GM10248 (cell line): ENCODE measurements at regions of chr12 and their contacts with region 1.

Region 1: DNA sequence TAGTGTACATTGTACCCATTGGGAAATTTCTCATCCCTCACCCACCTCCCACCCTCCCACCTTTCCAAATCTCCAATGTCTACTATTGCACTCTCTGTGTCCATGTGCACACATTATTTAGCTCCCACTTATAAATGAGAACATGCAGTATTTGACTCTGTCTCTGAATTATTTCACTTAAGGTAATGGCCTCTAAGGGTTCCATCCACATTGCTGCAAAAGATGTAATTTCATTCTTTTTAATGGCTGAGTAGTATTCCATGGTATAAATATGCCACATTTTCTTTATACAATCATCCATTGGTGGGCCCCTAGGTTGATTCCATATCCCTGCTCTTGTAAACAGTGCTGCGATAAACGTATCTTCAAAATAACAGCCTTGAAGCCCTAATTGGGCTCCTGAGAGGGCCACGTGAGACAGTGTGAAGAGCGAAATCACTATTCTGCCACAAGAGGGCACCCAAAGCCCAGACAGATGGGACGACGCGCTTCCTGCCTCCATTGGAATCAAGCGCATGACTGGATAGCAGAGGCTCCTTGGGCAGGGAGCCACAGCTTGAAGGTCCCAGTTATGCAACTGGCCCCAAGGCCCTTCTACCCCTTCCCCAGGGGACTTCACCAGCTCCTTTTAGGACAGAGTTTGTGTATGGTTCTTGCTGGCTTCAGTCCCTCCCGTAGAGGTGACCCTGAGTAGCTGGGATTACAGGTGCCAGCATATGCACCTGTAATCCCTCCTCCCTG is 21.3 kb upstream of the CD27 start:
- DNase-seq: peak; percentile 85
- CTCF ChIP-seq: peak; percentile 83

Region 2: DNA sequence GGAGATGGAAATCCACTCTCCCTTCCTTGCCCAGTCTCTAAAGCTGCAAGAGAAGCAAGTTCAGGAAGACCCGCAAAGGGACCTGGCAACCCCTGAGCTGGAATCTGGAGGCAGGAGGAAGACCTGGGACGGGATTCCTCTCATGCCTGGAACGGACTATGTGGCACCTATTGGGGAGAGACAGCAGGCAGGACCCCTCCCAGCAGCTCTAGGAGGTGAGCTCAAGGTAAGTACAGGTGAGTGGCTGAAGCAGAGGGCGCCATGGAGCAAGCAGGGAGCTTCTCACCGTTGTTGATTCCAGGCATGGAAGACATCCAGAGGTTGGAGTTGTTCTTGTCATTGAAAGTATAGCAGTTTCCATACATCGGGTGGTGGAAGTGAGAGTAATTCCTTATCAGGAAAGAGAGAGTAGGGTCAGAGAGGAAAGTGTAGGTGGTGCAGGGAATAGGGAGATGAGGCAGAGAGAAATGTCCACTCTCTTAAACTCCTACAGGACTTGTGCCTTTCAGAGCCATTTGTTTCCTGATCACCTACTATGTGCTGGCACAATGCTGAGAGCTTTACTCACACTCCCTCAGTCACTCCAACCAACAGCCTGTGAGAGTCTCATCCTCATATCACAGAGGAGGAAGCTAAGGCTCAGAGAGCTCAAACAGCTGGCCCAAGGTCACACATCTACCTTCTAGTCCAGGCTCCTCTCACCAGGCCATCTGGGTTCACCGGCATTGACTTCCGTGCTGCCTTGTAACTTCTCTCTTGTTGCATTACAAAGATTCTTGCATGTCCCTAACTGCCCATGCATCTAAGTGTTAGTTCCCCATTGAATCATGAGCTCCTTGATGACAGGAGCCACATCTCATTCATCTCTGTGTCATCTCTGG is 67.7 kb before region 1 on chr12:
- CTCF ChIA-PET with region 1: no interaction called
- POLR2A ChIA-PET with region 1: no interaction called
- DNase-seq: no peak
- CTCF ChIP-seq: no peak

Region 3: DNA sequence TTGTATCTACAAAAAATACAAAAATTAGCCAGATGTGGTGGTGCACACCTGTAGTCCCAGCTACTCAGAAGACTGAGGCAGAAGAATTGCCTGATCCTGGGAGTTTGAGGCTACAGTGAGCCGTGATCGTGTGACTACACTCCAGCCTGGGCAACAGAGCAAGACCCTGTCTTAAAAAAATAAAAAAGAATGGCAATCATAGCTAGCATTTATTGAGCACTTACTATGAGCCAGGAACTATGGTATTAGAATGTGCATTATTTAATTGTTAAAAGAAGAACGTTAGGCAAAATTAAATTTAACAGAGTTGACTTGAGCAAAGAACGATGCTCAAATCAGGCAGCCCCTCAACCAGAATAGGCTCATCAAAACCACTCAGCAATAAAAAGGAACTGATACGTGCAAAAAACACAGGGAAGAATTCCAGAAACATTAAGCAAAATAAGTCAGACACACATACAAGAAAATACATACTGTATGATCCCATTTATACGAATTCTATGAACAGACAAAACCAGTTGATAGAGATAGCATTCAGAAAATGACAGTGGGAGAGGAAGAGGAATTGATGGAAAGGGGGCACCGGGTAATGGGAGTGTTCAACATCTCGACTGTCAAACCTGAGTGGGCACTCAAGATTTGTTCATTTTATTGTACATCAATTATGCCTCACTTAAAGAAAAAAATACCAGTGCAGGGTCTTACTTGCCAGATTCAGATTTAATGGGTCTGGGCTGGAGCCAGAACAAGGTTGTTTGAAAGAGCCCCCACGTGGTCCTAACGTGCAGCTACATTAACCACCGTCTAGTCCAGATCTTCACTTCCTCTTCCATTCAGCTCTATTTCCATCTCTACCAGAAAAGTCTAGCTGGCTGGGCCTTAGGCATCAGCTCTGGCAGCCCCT is 56.1 kb before region 1 on chr12:
- CTCF ChIA-PET with region 1: no interaction called
- POLR2A ChIA-PET with region 1: no interaction called
- DNase-seq: peak; percentile 80
- CTCF ChIP-seq: peak; percentile 49

Region 4: DNA sequence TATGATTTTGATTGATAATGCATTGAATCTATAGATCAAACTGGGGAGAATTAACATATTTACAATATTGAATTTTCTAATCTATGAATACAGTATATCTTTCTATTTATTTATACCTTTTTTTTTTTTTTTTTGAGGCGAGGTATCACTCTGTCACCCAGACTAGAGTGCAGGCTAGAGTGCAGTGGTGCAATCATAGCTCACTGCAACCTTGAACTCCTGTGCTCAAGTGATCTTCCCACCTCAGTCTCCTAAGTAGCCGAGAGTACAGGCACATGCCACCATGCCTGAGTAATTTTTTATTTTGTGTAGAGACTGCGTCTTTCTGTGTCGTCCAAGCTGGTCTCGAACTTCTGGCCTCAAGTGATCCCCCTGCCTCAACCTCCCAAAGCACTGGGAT is 19.0 kb before region 1 on chr12:
- CTCF ChIA-PET with region 1: no interaction called
- POLR2A ChIA-PET with region 1: no interaction called
- DNase-seq: no peak
- CTCF ChIP-seq: no peak

Region 5: DNA sequence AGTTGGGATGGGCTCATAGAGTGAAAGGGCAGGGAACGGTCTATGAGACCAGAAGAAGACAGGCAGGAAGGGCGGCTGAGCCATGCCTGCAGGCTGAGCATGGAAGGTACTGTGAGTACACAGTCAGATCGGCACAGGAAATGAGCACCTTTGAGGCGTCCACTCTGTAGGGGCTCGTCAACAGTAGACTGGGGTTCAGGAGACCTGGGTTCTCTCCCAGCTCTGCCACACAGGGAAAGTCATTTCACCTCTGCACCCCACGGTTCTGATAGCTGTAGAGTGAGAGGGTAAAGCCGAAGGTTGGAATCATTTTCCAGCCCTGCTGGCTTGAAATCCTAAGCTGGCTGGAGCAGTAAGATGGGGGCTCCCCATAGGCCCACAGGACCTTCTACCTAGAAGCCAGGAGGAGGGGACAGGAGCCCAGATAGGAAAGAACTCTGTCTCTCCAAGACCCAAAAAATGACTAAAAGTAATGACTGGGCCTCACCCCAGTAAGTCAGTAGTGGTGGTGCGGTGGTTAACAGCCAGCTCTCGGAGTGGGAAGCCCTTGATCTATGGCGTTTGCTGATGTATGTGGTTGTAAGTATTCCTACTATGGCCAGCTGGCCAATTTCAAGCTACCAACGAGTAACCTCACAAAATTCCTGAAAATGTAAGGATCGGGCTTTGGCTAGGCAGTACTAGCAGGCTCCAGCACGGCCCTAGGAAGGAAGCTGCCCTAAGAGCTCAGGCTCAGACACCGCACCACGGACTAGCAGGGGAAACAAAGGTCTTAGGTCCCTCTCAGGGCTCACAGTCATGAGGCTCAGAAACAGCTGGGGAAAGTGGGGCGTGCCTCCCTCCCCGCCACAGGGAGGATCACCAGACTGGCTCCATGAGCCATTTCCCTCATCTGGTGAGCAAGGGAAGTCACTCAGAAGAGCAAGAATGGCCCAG is 11.0 kb after region 1 on chr12:
- CTCF ChIA-PET with region 1: interaction called, 10 read pairs
- POLR2A ChIA-PET with region 1: no interaction called
- DNase-seq: no peak
- CTCF ChIP-seq: no peak

Region 6: DNA sequence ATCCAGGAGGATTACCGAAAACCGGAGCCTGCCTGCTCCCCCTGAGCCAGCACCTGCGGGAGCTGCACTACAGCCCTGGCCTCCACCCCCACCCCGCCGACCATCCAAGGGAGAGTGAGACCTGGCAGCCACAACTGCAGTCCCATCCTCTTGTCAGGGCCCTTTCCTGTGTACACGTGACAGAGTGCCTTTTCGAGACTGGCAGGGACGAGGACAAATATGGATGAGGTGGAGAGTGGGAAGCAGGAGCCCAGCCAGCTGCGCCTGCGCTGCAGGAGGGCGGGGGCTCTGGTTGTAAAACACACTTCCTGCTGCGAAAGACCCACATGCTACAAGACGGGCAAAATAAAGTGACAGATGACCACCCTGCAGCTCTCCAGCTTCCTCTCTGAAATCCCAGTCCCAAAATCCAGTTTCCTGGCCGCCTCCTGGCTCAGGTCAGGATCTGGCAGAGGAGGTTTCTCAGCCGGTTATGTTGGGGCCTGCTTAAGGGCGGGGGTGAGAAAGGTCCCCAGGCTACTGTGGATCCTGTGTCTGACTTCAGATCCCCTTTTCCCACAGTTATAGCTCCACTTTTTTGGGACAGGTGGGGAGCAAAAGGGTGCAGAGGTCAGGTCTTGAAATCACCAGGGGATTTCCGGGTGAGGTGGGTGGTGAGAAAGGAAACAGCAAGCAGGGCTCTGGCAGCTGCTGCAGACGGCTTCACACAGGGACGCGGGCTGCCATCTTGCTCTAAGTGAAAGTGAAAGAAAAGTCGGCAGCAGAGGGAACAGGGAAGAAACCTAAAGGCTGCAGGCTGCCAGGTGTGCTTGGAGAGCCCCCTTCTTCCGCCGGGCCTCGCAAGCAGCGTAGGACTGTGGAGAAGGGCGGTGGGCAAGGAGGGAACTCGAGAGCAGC is 28.2 kb after region 1 on chr12 and contains the start of gene TAPBPL:
- CTCF ChIA-PET with region 1: interaction called, 91 read pairs
- POLR2A ChIA-PET with region 1: interaction called, 12 read pairs
- DNase-seq: peak; percentile 84
- CTCF ChIP-seq: no peak

Region 7: DNA sequence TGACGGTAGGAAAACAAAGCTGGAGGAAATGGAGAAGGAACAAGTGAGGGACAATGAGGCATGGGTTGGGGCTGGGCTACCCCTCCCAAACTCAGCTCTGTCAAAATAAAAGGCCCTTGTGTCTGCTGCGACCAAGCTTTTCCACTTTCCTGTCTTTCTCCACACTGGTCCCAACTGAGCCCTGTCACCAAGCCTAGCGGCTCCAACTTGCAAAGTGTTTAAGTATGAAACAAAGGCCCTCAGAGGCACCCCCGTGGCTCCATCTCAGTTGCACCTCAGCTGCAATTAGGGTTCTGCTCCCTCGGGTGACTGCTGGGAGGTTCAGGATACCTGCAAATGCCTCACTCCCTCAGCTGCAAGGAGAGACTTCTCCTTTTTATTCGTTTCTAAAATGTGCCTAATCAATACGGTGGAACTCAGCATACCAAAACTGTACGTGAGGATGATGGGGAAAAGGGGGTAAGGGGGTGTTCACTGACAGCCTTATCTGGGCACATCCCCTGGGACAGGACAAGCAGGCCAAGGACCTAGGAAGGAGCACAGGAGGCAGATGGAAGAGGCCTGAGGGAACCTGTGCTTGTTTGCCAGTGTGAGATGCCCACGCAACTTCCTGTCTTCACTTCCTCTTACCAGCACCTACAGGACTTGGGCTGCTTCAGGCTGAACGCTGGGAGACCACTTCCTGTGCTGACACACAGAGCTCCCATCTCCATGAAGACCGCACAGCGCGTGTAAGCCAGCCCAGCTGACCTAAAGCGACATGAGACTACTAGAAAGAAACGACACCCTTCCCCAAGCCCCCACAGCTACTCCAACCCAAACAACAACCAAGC is 38.2 kb after region 1 on chr12:
- CTCF ChIA-PET with region 1: interaction called, 89 read pairs
- POLR2A ChIA-PET with region 1: interaction called, 4 read pairs
- DNase-seq: peak; percentile 84
- CTCF ChIP-seq: no peak

Region 8: GRCh38 chr12:6554168-6555017 is 131.0 kb after region 1 on chr12:
- CTCF ChIA-PET with region 1: interaction called, 19 read pairs
- POLR2A ChIA-PET with region 1: no interaction called
- DNase-seq: peak; percentile 88
- CTCF ChIP-seq: peak; percentile 77